OCI-LY7 (cell line): ENCODE measurements at regions of chr2 and their contacts with region 1.

Region 1: DNA sequence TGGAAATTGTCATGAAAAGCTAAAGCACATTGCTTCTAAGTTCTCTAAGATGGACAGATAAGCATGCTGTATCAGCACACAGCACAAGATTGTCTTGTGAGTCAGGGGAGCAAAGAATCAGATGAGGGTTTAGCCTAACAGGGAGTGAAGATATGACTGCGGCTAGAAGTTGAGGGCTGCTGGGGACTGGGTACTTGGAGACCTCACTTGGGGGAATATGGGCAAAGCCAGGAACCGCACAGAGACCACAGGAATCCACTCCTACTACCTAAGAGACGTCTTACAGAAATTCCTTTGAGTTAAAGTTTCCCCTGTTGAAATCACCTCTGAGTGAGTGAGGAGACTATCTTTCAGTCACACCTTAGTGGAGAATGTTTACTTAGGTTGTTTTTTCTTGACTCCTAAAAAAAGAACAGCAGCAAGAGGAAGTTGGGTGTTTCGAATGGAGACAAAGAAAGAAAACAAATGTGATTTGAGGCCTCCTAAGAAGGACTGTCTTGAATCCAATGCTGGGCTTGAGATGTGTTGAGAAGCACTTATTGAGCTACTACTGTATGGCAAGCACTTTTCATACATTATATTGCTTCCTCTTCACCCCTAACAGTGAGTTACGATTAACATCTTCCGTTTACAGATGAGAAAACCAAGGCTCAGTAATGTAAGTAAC is 100.7 kb downstream of the ANKRD44 start:
- DNase-seq: peak; percentile 78
- H3K4me3 ChIP-seq: peak overlapping the region; percentile 45
- H3K27ac ChIP-seq: peak overlapping the region; percentile 96
- H3K4me1 ChIP-seq: peaks cover 100% of the 10 kb centered on the region
- CTCF ChIP-seq: no peak

Region 2: DNA sequence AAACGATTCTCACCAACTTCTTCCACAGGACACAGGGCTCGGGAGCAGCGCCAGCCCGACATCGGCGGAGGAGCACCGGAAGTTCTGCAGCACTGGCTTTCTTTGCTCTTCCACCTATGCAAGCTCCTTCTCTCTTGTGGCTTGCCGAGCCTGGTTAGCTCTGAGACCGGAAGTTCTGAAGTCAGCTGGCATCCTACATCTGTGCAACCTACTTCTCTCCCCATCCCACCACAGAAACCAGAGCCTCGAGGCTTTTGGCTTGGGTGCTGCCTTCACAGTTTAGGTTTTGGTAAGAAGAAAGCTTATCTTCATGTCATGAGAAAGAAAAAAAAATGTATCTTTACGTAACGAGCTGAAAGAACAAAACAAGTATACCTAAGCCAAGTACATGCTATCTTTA is 11.0 kb before region 1 on chr2:
- CTCF ChIA-PET with region 1: interaction called, 6 read pairs
- POLR2A ChIA-PET with region 1: interaction called, 79 read pairs
- intact Hi-C with region 1: loop called (anchors 1 kb)
- DNase-seq: peak; percentile 97
- H3K4me3 ChIP-seq: peak overlapping the region; percentile 53
- H3K27ac ChIP-seq: peak overlapping the region; percentile 81
- H3K4me1 ChIP-seq: peaks cover 63% of the 10 kb centered on the region
- CTCF ChIP-seq: no peak

Region 3: DNA sequence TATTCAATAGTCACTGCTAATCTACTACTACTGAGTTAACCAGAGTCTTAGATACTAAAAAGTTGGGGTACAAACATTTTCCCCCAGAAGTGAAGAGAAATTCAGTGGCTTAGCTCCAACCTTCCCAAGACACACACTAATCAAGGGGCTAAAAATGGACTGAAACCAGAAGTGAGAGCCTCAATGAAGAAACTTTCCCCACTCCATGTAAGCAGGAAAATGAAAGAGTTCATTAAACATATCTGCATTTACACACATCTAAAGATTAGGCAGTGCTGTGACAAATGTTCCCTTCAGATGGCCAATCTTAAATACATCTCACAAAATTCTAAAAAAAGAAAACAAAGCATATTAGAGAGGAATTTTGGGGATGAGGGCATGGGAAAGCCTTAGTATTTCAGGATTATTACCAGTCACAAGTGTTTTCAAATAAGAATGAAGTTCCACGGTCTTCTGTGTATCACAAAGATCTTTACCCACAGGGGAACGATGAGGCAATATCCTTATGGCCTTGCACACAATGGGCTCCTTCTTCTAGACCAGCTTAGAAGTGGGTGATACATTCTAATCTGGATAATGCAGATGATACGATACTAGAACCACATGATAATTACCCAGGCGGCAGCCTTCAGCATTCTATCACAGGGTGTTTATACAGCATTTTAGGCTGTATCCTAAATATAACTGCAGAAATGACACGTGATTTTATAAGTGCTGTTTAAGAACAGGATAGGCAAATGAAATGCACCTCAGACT is 83.6 kb after region 1 on chr2:
- CTCF ChIA-PET with region 1: interaction called, 3 read pairs
- POLR2A ChIA-PET with region 1: interaction called, 8 read pairs
- intact Hi-C with region 1: loop called (anchors 2 kb)
- DNase-seq: peak; percentile 79
- H3K4me3 ChIP-seq: peak overlapping the region; percentile 64
- H3K27ac ChIP-seq: peak overlapping the region; percentile 91
- H3K4me1 ChIP-seq: peaks cover 69% of the 10 kb centered on the region
- CTCF ChIP-seq: no peak

Region 4: DNA sequence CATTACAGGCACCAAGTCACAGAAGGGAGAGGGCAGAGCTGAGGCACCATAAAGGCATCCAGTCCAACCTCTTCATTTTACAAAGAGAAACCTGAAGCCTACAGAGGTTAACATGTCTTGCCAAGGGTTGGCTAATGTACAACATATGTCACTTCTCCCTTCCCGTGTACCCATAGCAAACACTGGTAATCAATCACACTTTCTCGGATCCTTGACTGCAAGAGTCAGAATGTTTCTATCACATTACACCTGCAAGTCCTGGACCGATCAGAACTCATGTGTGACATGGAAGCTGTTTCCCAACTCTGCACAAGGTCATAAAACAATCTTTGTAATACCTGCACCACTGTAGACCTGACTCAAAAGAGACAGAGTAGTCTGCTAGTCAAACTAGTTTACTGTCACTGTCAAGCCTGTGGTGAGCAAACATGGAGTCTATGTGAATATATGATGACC is 94.7 kb after region 1 on chr2:
- CTCF ChIA-PET with region 1: interaction called, 3 read pairs
- POLR2A ChIA-PET with region 1: interaction called, 31 read pairs
- intact Hi-C with region 1: loop called (anchors 1 kb)
- DNase-seq: peak; percentile 26
- H3K4me3 ChIP-seq: peak overlapping the region; percentile 50
- H3K27ac ChIP-seq: peak overlapping the region; percentile 83
- H3K4me1 ChIP-seq: peaks cover 88% of the 10 kb centered on the region
- CTCF ChIP-seq: no peak